WTC11 (cell line): ENCODE measurements at regions of chr11 and their contacts with region 1.

Region 1: GRCh38 chr11:73554671-73555320 is 43.1 kb downstream of the FAM168A start:
- DNase-seq: no peak
- ATAC-seq: 0 out of 2 replicates have a peak, but pooled peaks have one; percentile 38
- H3K4me3 Mint-ChIP-seq: no peak overlapping the region
- H3K27ac Mint-ChIP-seq: peak overlapping the region; percentile 80
- H3K4me1 Mint-ChIP-seq: peaks cover 40% of the 10 kb centered on the region
- H3K27me3 Mint-ChIP-seq: no peaks in the 10 kb centered on the region
- CTCF ChIP-seq: no peak

Region 2: GRCh38 chr11:73566422-73566821 is 11.6 kb after region 1 on chr11:
- CTCF ChIA-PET with region 1: interaction called, 10 read pairs
- POLR2A ChIA-PET with region 1: no interaction called
- DNase-seq: no peak
- ATAC-seq: no peak
- H3K4me3 Mint-ChIP-seq: no peak overlapping the region
- H3K27ac Mint-ChIP-seq: no peak overlapping the region
- H3K4me1 Mint-ChIP-seq: peaks cover 38% of the 10 kb centered on the region
- H3K27me3 Mint-ChIP-seq: no peaks in the 10 kb centered on the region
- CTCF ChIP-seq: no peak